ENCODE measurements at regions of chr12 and their contacts with region 1.

Region 1: DNA sequence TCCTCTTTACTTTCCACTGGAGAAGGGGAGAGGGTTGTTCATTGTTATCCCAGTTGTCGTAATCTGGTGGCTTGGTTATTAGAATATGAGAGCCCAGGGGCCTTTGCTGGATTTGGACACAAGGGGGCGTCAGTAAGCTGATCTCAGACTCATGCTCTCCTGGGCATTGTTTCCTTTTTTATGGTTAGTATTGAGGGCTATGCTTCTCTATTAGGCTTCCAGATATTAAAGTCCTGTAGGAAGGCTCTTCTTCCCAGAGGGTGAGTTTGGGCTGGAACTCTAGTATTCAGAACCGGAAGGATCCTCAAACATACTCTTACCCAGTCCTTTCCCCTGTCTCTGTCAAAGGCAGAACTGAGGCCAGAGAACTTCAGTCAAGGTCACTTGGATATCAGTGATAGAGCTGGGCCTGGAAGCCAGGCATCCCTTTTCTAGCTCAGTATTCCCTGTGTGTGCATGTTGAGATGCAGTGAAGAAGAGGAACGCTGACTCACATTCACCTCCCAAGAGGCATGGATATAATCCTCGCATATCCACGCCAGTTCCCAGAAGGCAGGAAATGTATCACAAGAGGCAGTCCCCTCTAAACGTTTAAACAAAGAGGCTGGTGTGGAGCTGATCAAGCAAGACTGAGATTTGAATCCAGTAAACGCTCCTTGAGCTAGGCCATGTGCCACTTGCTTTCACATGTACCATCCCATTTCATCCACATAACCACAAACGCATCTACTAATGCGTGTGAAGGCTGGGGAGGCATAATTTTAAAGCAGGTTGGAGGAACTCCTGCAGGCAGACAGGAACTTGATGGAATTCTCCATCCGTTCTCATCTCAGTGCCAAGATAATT is 41.6 kb downstream of the UBE3B start:
- DNase-seq: peak in 4 of 5 donors; percentile 60 to 71 (median 66)
- ATAC-seq: peak; percentile 27 to 69 (median 40)
- H3K4me3 ChIP-seq: no peak overlapping the region
- H3K27ac ChIP-seq: peak overlapping the region; percentile 35 to 89 (median 75)
- H3K4me1 ChIP-seq: peaks cover 14 to 57% (median 26%) of the 10 kb centered on the region in 12 donors
- H3K27me3 ChIP-seq: no peaks in the 10 kb centered on the region
- CTCF ChIP-seq: peak; percentile 74 to 95 (median 86)
- POLR2A ChIP-seq: no peak

Region 2: GRCh38 chr12:109563291-109564284 is 44.5 kb after region 1 on chr12:
- intact Hi-C with region 1: loop called in 1 of 10 experiments (anchors 5 kb)
- DNase-seq: peak; percentile 59 to 74 (median 70)
- ATAC-seq: peak; percentile 76 to 87 (median 77)
- H3K4me3 ChIP-seq: peak overlapping the region in 6 of 12 donors; percentile 2 to 37 (median 14)
- H3K27ac ChIP-seq: peak overlapping the region; percentile 24 to 80 (median 70)
- H3K4me1 ChIP-seq: peaks cover 0 to 18% (median 8%) of the 10 kb centered on the region in 12 donors
- H3K27me3 ChIP-seq: no peaks in the 10 kb centered on the region
- CTCF ChIP-seq: no peak
- POLR2A ChIP-seq: no peak

Region 3: GRCh38 chr12:109592905-109593272 is 73.8 kb after region 1 on chr12:
- intact Hi-C with region 1: loop called in 8 of 10 experiments (anchors 2 to 5 kb)
- DNase-seq: peak in 1 of 5 donors; percentile 52
- ATAC-seq: peak in 3 of 4 donors; percentile 47 to 62 (median 48)
- H3K4me3 ChIP-seq: no peak overlapping the region
- H3K27ac ChIP-seq: peak overlapping the region in 8 of 12 donors; percentile 29 to 75 (median 60)
- H3K4me1 ChIP-seq: peaks cover 0 to 19% (median 4%) of the 10 kb centered on the region in 12 donors
- H3K27me3 ChIP-seq: no peaks in the 10 kb centered on the region
- CTCF ChIP-seq: no peak
- POLR2A ChIP-seq: no peak

Region 4: DNA sequence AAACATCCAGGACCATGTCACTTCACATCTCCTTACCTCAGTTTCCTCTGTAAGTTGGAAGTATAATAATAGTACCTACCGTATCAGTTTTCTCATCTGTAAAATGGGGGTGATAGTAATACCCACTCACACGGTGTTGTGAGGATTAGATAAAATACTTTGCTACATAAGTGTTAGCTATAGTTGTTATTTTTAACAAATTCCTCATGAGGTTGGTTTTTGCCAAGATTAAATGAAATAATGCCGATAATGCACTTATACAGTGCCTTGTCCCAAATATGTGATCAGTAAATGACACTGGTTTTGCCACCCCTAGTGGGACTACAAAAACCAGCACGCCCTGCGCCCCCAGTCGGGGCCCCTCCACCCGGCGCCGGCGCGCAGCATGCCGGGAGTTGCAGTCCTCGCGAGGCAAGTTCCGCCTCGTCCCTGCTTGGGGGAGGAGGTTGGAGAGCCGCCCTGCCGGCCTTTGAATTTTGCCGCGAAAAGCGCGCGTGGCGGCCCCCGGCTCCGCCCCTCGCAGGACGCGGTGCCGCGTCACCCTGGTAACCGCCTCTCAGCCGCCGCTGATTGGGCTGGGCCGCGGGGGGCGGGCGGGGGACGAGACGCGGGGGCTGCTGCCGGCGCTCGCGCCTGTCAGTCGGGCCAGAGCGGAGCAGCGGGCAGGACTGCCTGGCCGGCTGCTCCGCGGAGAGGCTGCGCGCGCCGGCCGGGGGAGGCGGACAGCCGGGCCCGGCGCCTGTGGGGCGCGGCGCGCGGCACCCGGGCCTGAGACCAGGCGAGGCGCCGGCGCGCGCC is 194.3 kb after region 1 on chr12 and contains the start of gene FAM222A:
- intact Hi-C with region 1: loop called in 3 of 10 experiments (anchors 5 to 10 kb)
- DNase-seq: peak; percentile 98 to 99 (median 98)
- ATAC-seq: peak; percentile 93 to 97 (median 95)
- H3K4me3 ChIP-seq: peak within 1 kb of the TSS; percentile 28 to 84 (median 68)
- H3K27ac ChIP-seq: peak within 1 kb of the TSS in 11 of 12 donors; percentile 37 to 83 (median 71)
- H3K4me1 ChIP-seq: peaks cover 0 to 62% (median 15%) of the 10 kb centered on the region in 12 donors
- H3K27me3 ChIP-seq: peaks cover 0 to 38% (median 10%) of the 10 kb centered on the region in 9 donors
- CTCF ChIP-seq: peak in 6 of 12 donors; percentile 9 to 39 (median 20)
- POLR2A ChIP-seq: peak in 1 of 2 donors; percentile 81
- total RNA-seq, gene FAM222A: 3.5 to 45.8 (median 11.2) TPM

Region 5: GRCh38 chr12:109775172-109775881 is 256.3 kb after region 1 on chr12:
- intact Hi-C with region 1: loop called (anchors 1 to 5 kb)
- DNase-seq: peak; percentile 67 to 84 (median 68)
- ATAC-seq: peak; percentile 75 to 86 (median 80)
- H3K4me3 ChIP-seq: no peak overlapping the region
- H3K27ac ChIP-seq: no peak overlapping the region
- H3K4me1 ChIP-seq: peaks cover 0 to 16% (median 0%) of the 10 kb centered on the region in 12 donors
- H3K27me3 ChIP-seq: peaks cover 0 to 2% (median 0%) of the 10 kb centered on the region in 9 donors
- CTCF ChIP-seq: peak; percentile 78 to 96 (median 86)
- POLR2A ChIP-seq: no peak

Measured in heart left ventricle (tissue), 16 donors.